ENCODE measurements at regions of chr12 and their contacts with region 1.

Region 1: GRCh38 chr12:46342562-46343033 is 30.0 kb downstream of the SLC38A2 start:
- DNase-seq: peak in 1 of 2 donors; percentile 32
- ATAC-seq: peak; percentile 47 to 89 (median 79)
- H3K4me3 ChIP-seq: no peak overlapping the region
- H3K27ac ChIP-seq: no peak overlapping the region
- H3K4me1 ChIP-seq: peaks cover 0 to 8% (median 0%) of the 10 kb centered on the region in 9 donors
- H3K27me3 ChIP-seq: no peaks in the 10 kb centered on the region
- CTCF ChIP-seq: peak; percentile 44 to 86 (median 66)

Region 2: GRCh38 chr12:46406352-46407027 is 63.9 kb after region 1 on chr12:
- intact Hi-C with region 1: no loop called
- DNase-seq: no peak
- ATAC-seq: no peak
- H3K4me3 ChIP-seq: no peak overlapping the region
- H3K27ac ChIP-seq: no peak overlapping the region
- H3K4me1 ChIP-seq: peaks cover 10 to 80% (median 47%) of the 10 kb centered on the region in 9 donors
- H3K27me3 ChIP-seq: no peaks in the 10 kb centered on the region
- CTCF ChIP-seq: no peak

Region 3: DNA sequence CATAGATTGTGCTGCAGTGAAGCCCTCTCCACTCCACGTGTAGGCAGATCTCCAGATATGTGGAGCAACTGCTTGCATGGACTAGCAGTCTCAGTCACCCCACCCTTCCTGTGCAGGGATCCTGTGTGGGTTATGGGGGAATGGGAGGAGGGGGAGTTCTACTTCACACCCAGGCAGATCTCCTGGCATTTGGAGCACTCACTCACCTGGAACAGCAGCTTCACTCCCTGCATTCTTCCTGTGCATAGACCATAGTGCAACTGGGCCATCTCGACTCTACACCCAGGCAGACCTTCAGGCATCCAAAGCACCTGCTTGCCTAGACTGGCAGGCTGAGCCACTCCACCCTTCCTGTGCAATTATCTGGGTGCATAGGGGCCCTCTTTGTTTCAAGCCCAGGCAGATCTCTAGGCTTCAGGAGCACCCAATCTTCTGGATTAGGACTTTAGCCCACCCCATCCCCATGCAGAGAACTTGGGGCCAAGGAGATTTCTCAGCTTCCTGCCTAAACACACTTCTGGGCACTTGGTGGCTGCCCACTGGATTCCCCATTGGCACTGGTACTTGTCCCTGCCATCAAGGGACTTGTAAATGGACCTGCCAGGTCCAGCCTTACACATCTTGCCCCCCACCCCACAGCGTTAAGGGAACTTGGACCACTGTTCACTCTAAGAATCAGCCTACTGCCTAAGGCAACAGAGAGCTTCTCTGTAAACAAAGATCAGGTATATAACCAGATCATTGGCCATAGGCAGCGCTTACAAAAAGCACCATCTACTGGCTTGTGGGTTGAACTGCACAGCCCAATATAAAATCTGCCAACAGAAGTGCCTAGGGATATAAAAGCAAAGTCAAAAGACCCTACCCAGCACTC is 641.0 kb after region 1 on chr12:
- intact Hi-C with region 1: loop called in 1 of 10 experiments (anchors 5 kb)
- DNase-seq: no peak
- ATAC-seq: peak in 6 of 8 donors; percentile 53 to 78 (median 58)
- H3K4me3 ChIP-seq: no peak overlapping the region
- H3K27ac ChIP-seq: no peak overlapping the region
- H3K4me1 ChIP-seq: no peaks in the 10 kb centered on the region
- H3K27me3 ChIP-seq: peaks cover 0 to 10% (median 0%) of the 10 kb centered on the region in 7 donors
- CTCF ChIP-seq: peak; percentile 42 to 75 (median 72)

Region 4: GRCh38 chr12:47021298-47021697 is 678.7 kb after region 1 on chr12:
- intact Hi-C with region 1: loop called in 8 of 10 experiments (anchors 2 to 10 kb)
- DNase-seq: peak in 1 of 2 donors; percentile 21
- ATAC-seq: peak in 3 of 8 donors; percentile 37 to 50 (median 42)
- H3K4me3 ChIP-seq: no peak overlapping the region
- H3K27ac ChIP-seq: no peak overlapping the region
- H3K4me1 ChIP-seq: peaks cover 0 to 9% (median 0%) of the 10 kb centered on the region in 9 donors
- H3K27me3 ChIP-seq: no peaks in the 10 kb centered on the region
- CTCF ChIP-seq: peak; percentile 32 to 83 (median 70)

Measured in heart right ventricle (tissue), 16 donors.